ENCODE measurements at regions of chr6 and their contacts with region 1.

Region 1: GRCh38 chr6:105484238-105485161 is 81.6 kb upstream of the PREP start:
- DNase-seq: no peak
- H3K4me3 ChIP-seq: no peak overlapping the region
- CTCF ChIP-seq: peak; percentile 49

Region 2: DNA sequence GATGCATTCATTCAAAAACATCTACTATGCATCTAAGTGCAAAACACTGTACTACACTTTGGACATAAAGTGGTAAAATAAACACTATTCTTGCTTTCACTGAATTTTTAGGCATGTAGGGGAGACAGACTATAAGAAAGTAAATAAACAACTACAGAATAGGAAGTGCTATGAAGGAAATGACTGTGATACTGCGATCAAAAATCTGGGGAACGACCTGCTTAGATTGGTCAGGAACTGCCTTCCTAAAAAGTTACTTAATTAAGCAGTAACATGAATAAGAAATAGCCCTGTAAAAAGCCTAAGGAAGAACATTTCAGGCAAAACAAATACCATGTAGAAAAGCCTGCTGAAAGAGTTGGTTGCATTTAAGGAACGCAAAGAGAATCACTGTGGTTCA is 675.4 kb before region 1 on chr6:
- CTCF ChIA-PET with region 1: no interaction called
- POLR2A ChIA-PET with region 1: no interaction called
- DNase-seq: no peak
- H3K4me3 ChIP-seq: no peak overlapping the region
- CTCF ChIP-seq: no peak

Region 3: DNA sequence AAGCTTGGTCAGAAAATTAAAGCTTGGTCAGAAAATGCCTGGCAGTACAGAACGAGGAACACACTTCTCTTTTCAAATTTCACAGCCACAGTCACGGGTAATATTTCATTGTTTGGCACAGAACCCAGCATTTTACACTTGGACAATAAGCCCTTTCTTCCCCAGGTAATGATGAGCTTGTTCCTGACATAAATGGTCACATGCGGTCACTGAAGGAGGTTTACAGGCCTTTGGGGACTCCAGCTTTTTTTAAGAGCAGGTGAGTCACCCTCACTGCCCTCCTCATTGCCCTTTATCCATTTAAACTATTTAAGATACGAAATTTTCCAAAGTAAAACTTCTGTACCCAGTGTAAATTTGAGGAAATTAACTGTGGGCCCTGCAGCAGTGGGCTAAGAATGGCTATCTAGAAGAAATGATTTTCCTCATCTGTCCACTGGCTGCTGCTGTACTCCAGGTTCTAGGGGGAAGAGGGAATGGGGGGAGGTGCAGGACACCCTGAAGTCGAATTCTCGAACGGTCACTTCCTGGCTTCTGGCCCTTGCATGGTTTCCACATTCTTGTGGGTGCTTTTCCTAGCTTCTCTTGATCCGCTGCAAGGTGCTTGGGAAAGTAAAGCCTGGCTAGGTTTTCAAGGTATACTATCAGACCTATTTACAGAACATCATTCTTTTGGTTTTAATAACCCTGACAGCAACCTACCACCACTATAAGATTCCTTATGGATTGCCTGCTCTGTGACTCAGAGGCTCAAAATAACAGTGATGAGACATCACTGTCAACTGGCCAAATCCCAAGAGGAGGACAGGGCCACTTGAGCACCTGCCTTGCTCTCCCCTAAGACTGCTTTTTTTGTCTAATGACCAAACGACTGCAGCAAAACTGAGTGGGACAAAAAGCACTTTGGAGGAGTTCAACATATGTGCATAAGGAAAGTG is 157.4 kb before region 1 on chr6:
- CTCF ChIA-PET with region 1: no interaction called
- POLR2A ChIA-PET with region 1: no interaction called
- DNase-seq: no peak
- H3K4me3 ChIP-seq: no peak overlapping the region
- CTCF ChIP-seq: no peak

Region 4: DNA sequence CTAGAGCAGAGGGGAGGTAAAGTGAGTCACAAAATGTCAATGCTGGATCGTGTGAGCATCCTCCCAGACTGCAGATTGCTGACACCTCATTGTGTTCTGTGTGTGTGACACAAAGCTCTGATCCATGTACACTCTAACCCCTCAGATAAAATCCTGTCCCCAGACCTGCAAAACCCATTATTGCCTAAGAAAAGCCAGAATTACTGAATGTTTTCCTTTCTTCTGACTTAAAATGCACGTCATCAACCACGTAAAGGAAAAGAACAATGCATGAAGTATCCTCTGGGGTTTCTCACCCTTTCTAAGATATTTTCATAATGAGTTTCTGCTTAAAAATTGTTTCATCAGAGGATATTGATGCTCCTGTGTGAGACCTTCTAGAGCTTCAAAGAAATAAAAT is 136.4 kb after region 1 on chr6:
- CTCF ChIA-PET with region 1: no interaction called
- POLR2A ChIA-PET with region 1: no interaction called
- DNase-seq: no peak
- H3K4me3 ChIP-seq: no peak overlapping the region
- CTCF ChIP-seq: no peak

Region 5: DNA sequence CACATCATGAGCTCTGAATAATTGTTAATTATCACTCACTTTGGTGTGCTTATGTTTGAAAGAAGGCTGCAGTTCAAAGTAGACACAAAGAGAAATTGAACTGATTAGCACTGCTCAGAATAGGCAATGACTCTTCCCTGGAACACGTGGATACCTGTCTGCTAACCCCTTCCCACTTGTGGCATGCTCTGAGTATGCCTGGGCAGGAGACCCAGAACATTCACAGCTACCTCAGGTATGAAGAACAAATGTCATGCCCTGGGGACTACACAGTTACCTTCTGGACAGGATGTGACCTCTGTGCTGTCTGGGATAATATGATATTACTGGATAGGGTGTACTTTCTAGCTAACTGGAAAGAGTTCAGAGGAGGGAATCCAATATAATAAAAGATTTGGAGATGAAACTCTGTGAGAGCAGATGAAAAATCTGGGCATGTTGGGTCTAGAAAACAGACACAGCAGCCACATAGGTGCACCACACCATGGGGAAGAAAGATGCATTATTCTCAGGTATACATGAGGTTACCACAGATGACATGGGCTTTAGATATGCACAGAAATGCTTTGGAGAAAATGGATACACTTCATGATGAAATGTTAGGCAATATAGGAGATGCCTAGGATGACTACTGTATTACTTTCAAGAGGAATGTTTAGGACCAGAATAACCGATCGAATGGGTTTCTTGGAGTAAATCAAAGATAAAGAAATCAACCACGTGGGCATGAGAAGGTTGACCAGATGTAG is 242.6 kb after region 1 on chr6:
- CTCF ChIA-PET with region 1: interaction called, 12 read pairs
- POLR2A ChIA-PET with region 1: no interaction called
- DNase-seq: no peak
- H3K4me3 ChIP-seq: no peak overlapping the region
- CTCF ChIP-seq: no peak

Region 6: DNA sequence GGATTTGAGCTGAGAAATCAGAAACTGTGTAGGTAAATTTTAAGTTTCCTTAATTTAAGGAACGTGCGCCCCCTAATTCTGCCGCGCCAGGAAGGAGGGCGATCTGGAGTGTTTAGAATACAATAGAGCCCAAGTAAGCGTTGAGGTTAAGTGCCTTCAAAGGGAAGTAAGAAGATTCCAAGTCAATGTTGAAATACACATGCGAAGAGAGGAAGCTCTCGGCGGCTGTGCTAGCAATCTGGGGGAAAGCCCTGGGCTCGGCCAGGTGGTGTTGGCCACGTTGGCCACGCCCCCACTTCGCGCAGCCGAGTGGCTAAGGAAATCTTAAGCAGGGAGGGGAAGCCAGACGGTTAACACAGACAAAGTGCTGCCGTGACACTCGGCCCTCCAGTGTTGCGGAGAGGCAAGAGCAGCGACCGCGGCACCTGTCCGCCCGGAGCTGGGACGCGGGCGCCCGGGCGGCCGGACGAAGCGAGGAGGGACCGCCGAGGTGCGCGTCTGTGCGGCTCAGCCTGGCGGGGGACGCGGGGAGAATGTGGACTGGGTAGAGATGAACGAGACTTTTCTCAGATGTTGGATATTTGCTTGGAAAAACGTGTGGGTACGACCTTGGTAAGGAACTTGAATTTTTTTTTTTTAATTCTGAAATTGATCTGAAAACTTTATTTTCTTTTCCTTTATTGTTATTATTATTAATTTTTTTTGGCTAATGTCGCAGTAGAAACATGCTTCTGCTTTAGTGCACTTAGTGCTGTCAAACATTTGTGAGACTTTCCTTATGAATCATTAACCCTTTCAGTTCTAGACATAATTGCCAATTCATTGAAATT is 601.7 kb after region 1 on chr6 and contains the start of gene PRDM1:
- CTCF ChIA-PET with region 1: interaction called, 12 read pairs
- POLR2A ChIA-PET with region 1: interaction called, 4 read pairs
- DNase-seq: no peak
- H3K4me3 ChIP-seq: peak within 1 kb of the TSS; percentile 68
- CTCF ChIP-seq: no peak

Region 7: DNA sequence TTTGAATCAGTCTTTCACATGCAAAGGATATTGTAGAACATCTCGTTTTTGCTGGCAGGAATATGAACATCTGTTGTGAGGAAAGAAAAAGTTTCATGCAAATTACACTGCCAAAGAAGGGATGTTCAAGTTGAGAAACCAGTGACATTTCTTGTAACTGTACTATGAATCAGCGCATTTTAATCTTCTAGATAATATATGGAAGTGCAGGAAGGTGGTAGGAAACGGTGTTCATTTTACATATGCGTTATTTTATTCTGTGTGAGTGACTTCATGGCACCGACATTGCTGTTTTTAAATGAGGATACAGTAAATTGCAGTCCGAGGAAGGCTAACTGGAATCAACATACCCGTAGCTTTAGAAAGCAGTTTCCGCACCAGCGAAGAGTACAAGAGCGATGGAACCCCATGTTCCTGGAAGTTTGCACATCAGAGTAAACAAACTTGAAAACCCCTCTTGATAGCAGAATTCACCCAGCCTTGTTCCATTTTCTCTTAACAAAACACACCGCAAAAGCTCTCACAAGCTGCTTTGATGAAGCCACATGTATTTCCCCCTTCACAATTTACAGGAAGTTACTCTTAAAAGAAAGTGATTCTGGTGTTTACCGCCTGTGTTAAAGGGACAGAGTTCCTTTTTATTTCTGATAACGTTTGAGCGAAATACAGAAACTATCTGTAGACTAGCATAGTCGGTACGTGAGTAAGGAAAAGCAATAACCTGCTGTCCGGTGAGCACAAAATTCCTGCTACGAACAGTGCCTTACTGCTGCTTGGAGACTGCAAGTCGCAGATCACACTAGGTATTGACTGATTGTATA is 613.1 kb after region 1 on chr6:
- CTCF ChIA-PET with region 1: interaction called, 15 read pairs
- POLR2A ChIA-PET with region 1: no interaction called
- DNase-seq: no peak
- H3K4me3 ChIP-seq: peak overlapping the region; percentile 53
- CTCF ChIP-seq: no peak